Mammary epithelial cell (primary cell): ENCODE measurements at regions of chr2 and their contacts with region 1.

Region 1: DNA sequence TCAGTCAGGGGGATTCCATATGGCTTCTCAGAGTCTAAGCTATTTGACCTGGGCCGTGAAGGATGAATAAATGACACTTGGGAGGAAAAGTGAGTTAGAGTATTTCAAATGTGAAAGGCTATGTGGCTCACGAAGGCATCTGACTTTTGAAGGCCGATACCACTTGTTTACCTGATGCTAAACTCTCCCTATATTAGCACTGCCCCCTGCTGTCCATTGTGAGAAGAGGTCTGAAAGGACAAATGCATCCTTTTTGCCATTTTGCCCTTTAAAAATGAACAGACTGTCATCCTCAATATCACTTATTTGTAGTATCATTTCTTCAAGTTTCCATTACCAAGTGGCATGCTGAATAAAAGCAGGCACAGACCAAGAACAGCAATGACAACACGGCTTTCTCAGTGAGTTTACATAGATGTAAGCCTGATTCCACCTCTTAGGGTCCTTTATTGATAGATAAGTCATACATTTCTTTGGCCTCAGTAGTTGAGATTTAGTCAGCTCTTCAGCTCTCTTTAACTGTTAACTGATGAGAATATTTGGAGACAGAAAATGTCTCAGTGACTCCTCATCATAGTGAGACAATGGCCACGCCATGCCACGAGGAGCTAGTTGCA is 40.1 kb downstream of the DOCK10 start:
- DNase-seq: peak; percentile 61
- H3K4me3 ChIP-seq: no peak overlapping the region
- H3K27ac ChIP-seq: no peak overlapping the region
- H3K4me1 ChIP-seq: peaks cover 15% of the 10 kb centered on the region
- H3K27me3 ChIP-seq: no peaks in the 10 kb centered on the region
- CTCF ChIP-seq: peak; percentile 82 to 87

Region 2: GRCh38 chr2:224650815-224651439 is 351.2 kb before region 1 on chr2:
- CTCF ChIA-PET with region 1: no interaction called
- dilution Hi-C with region 1: no loop called
- in situ Hi-C with region 1: no loop called
- intact Hi-C with region 1: loop called (anchors 5 kb)
- DNase-seq: peak; percentile 31
- H3K4me3 ChIP-seq: no peak overlapping the region
- H3K27ac ChIP-seq: no peak overlapping the region
- H3K4me1 ChIP-seq: no peaks in the 10 kb centered on the region
- H3K27me3 ChIP-seq: no peaks in the 10 kb centered on the region
- CTCF ChIP-seq: peak; percentile 66 to 81

Region 3: DNA sequence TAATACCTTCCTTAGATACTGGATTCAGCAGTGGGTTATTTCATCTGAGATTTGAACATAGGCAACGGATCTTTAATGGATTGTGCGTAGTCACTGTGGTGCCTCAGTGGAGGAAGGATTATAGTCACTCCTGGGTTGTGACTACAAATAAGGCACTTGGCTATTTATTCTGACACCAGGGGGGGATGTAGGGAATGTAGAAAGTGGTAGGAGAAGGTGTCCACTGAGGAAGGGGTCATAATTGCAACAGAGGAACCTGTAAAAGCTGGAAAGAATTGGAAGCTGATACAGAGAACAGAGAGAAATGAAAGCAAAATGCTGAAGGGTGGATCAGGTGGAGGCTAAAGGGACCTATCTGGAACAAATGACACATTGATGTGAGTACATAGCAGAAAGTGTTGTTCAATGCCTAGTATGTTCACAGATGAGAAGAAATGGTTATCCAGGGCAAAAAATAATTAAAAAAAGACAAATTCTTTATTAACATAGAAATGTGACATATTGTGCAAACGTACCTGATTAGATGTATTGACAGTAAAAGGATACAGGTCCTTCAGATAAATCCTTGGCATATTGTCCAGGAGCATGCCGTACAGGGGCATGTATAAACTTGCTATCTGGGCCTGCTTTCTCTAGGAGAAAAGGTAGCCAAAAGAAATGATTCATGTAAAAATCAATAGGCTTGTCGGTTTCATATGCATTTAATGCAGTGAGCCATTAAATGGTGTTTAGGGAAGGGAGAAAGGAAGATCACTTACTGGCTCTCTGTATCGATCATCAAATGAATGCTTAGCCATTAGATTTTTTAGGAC is 194.8 kb before region 1 on chr2:
- CTCF ChIA-PET with region 1: interaction called, 3 read pairs
- dilution Hi-C with region 1: no loop called
- in situ Hi-C with region 1: loop called in 1 of 2 experiments (anchors 25 kb)
- intact Hi-C with region 1: loop called (anchors 1 kb)
- DNase-seq: peak; percentile 73
- H3K4me3 ChIP-seq: no peak overlapping the region
- H3K27ac ChIP-seq: peak overlapping the region; percentile 43
- H3K4me1 ChIP-seq: peaks cover 14% of the 10 kb centered on the region
- H3K27me3 ChIP-seq: no peaks in the 10 kb centered on the region
- CTCF ChIP-seq: peak; percentile 6 to 43

Region 4: GRCh38 chr2:224885836-224886547 is 116.2 kb before region 1 on chr2:
- CTCF ChIA-PET with region 1: no interaction called
- dilution Hi-C with region 1: no loop called
- in situ Hi-C with region 1: no loop called
- intact Hi-C with region 1: loop called (anchors 1 kb)
- DNase-seq: peak; percentile 89
- H3K4me3 ChIP-seq: peak overlapping the region in 1 of 3 experiments; percentile 17
- H3K27ac ChIP-seq: peak overlapping the region; percentile 92
- H3K4me1 ChIP-seq: peaks cover 48% of the 10 kb centered on the region
- H3K27me3 ChIP-seq: no peaks in the 10 kb centered on the region
- CTCF ChIP-seq: no peak

Region 5: DNA sequence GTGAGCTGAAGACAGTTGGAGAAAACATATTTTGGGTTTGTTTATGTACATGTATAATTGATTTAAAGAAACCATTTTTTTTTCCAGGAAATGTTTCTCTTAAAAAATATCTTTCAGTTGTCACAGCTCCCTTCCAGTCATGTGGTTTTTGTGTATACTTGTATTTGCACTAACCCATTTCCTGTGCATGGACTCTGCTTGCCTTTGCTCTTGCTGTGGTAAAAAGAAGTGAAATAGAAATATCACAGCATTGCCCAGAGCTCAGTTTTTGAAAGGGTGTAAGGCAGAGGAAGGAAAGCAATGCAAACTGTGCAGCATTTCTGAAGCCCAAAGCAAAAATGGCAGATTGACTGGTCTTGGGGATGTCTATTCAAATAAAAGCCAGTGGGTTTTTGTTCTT is 50.6 kb after region 1 on chr2:
- CTCF ChIA-PET with region 1: no interaction called
- dilution Hi-C with region 1: no loop called
- in situ Hi-C with region 1: no loop called
- intact Hi-C with region 1: no loop called
- DNase-seq: no peak
- H3K4me3 ChIP-seq: no peak overlapping the region
- H3K27ac ChIP-seq: no peak overlapping the region
- H3K4me1 ChIP-seq: no peaks in the 10 kb centered on the region
- H3K27me3 ChIP-seq: no peaks in the 10 kb centered on the region
- CTCF ChIP-seq: no peak

Region 6: DNA sequence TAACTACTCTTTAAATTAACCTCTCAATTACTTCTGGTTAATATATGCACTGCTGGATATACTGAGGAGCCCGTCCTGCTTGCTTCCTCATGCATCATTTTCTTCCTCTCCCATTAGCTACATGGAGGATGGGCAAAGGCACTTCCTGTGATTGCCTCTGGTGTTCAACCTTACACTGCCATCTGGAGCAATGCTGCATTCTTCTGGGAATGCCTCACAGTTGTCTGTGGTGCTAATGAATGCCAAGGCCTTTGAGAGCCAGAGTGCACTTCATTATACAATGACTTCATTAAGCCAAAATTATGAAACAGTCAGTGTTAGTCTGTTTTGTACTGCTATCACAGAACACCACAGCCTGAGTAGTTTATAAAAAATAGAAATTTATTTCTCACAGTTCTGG is 175.0 kb after region 1 on chr2:
- CTCF ChIA-PET with region 1: no interaction called
- dilution Hi-C with region 1: no loop called
- in situ Hi-C with region 1: no loop called
- intact Hi-C with region 1: loop called (anchors 2 kb)
- DNase-seq: peak; percentile 72
- H3K4me3 ChIP-seq: no peak overlapping the region
- H3K27ac ChIP-seq: no peak overlapping the region
- H3K4me1 ChIP-seq: peaks cover 5% of the 10 kb centered on the region
- H3K27me3 ChIP-seq: no peaks in the 10 kb centered on the region
- CTCF ChIP-seq: peak in 1 of 2 donors; percentile 36